Ascending aorta (tissue), 2 donors: ENCODE measurements at regions of chr3 and their contacts with region 1.

Region 1: GRCh38 chr3:123884203-123884831 is at the start of gene MYLK:
- DNase-seq: peak; percentile 64 to 95
- H3K4me3 ChIP-seq: peak within 1 kb of the TSS; percentile 83 to 94
- H3K27ac ChIP-seq: peak within 1 kb of the TSS; percentile 83 to 85
- H3K4me1 ChIP-seq: peaks cover 0 to 8% of the 10 kb centered on the region in 2 donors
- H3K27me3 ChIP-seq: no peaks in the 10 kb centered on the region
- CTCF ChIP-seq: no peak
- total RNA-seq, gene MYLK: 196 TPM

Region 2: GRCh38 chr3:123745184-123745855 is 139.0 kb before region 1 on chr3:
- intact Hi-C with region 1: loop called (anchors 5 kb)
- DNase-seq: peak in 1 of 2 donors; percentile 52
- H3K4me3 ChIP-seq: no peak overlapping the region
- H3K27ac ChIP-seq: peak overlapping the region; percentile 48 to 49
- H3K4me1 ChIP-seq: peaks cover 0 to 42% of the 10 kb centered on the region in 2 donors
- H3K27me3 ChIP-seq: no peaks in the 10 kb centered on the region
- CTCF ChIP-seq: peak; percentile 30 to 43 (median 32)

Region 3: DNA sequence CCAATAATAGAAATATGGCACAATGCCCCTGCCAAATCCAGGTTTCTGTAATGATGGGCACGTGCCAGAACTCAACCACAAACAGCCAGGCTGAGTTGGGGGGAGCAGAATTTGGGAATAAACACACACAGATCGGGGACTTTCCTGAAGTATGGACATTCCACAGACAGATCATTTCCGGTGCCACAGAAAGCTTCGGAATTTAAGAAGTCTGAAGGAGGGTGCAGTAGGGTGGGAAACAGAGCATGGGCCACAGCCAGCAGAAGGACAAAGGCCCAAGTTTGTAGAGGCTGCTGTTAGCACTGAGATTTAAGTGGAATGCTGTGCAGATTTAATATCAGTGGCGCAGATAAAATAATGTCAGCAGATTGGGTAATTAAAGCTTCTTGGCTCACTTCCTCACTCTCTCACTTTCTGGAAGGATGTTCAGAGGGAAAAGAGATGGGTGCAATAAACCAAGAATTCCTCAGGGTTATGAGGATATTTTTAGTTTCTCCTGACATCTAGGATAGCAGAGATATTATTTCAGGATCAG is 67.6 kb before region 1 on chr3:
- intact Hi-C with region 1: loop called (anchors 5 kb)
- DNase-seq: no peak
- H3K4me3 ChIP-seq: no peak overlapping the region
- H3K27ac ChIP-seq: peak overlapping the region; percentile 86 to 91
- H3K4me1 ChIP-seq: peaks cover 11 to 44% of the 10 kb centered on the region in 2 donors
- H3K27me3 ChIP-seq: no peaks in the 10 kb centered on the region
- CTCF ChIP-seq: no peak

Region 4: DNA sequence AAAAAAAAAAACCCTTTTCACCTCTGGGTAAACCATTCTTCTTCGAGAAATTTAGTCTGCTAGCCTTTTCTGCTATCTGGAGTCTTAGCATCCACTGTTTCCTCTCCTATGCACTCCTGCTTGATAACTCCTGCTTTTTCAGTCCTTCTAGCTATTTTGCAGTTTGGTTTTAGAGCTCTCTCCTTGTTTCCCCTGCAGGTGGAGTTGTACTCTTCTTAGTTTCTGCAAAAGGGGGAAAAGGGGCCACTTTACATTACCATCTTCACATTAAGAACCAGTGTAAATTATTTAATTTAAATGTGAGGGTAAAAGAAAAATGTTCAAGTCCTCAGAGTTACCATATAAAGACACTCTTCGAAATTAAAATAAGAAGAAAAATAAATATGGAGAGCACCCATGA is 23.4 kb after region 1 on chr3:
- intact Hi-C with region 1: loop called (anchors 2 kb)
- DNase-seq: no peak
- H3K4me3 ChIP-seq: no peak overlapping the region
- H3K27ac ChIP-seq: peak overlapping the region; percentile 87 to 92
- H3K4me1 ChIP-seq: peaks cover 5 to 19% of the 10 kb centered on the region in 2 donors
- H3K27me3 ChIP-seq: no peaks in the 10 kb centered on the region
- CTCF ChIP-seq: no peak